Activated B cell treated with CpG ODN at 0.5 μM for 24 hours (primary cell): ENCODE measurements at regions of chr1 and their contacts with region 1.

Region 1: GRCh38 chr1:44631647-44632539 is 42.4 kb downstream of the TMEM53 start:
- DNase-seq: peak; percentile 92
- ATAC-seq: peak; percentile 76
- H3K4me3 Mint-ChIP-seq: peak overlapping the region; percentile 91
- H3K27ac Mint-ChIP-seq: peak overlapping the region; percentile 98
- H3K4me1 Mint-ChIP-seq: peaks cover 38% of the 10 kb centered on the region
- H3K27me3 Mint-ChIP-seq: no peaks in the 10 kb centered on the region
- CTCF ChIP-seq: no peak

Region 2: GRCh38 chr1:44213222-44214112 is 418.4 kb before region 1 on chr1 and contains the start of gene DMAP1:
- CTCF ChIA-PET with region 1: no interaction called
- POLR2A ChIA-PET with region 1: interaction called, 10 read pairs
- intact Hi-C with region 1: no loop called
- DNase-seq: peak; percentile 87
- ATAC-seq: peak; percentile 83
- H3K4me3 Mint-ChIP-seq: peak within 1 kb of the TSS; percentile 95
- H3K27ac Mint-ChIP-seq: peak within 1 kb of the TSS; percentile 91
- H3K4me1 Mint-ChIP-seq: peaks cover 38% of the 10 kb centered on the region
- H3K27me3 Mint-ChIP-seq: no peaks in the 10 kb centered on the region
- CTCF ChIP-seq: no peak
- total RNA-seq, gene DMAP1: 59.6 and 64.7 TPM in 2 replicates

Region 3: GRCh38 chr1:44646261-44647110 is 14.6 kb after region 1 on chr1:
- CTCF ChIA-PET with region 1: no interaction called
- POLR2A ChIA-PET with region 1: interaction called, 23 read pairs
- intact Hi-C with region 1: no loop called
- DNase-seq: no peak
- ATAC-seq: no peak
- H3K4me3 Mint-ChIP-seq: no peak overlapping the region
- H3K27ac Mint-ChIP-seq: no peak overlapping the region
- H3K4me1 Mint-ChIP-seq: no peaks in the 10 kb centered on the region
- H3K27me3 Mint-ChIP-seq: no peaks in the 10 kb centered on the region
- CTCF ChIP-seq: no peak

Region 4: DNA sequence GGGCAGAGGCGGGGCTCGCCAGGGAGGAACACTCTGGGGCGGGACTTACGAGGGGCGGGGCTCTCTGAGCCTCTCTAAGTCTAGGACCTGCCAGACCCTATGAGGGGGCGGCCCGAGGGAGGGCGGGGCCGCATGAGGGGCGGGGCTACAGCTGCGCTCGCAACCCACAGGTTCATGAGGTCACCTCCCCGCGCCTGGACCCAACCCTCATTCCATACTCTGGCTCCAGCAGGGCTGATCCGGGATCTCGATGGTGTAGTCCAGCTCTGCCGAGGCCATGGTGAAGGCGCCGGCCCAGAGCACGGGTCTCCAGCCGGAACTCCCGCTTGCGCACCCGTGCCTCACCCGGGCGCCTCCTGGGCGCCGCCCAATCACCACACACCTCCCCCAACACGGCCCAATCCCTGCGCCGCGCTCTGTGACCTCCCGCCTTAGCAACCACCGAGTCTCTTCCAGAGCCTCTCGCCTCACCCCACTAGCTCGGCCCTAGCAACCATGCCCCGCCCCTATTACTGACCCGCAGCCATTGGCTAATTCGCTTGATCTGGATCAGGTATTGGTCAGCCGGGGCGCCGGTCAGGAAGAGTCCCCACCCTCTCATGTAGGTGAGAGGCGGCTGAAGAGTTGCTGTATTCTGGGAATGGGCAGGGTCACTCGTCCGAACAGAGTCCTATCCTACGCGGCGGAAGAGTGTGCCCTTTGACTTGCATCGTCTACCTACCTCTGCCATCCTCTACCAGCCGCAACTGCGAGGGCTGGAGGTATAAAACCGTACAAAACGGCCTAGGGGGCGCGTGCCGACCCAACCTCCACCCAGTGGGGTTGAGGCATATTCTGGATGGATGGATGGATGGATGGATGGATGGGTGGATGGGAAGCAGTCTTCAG is 42.5 kb after region 1 on chr1 and contains the starts of genes ARMH1 and TMEM53:
- CTCF ChIA-PET with region 1: interaction called, 3 read pairs
- POLR2A ChIA-PET with region 1: interaction called, 58 read pairs
- intact Hi-C with region 1: loop called (anchors 1 kb)
- DNase-seq: peak; percentile 98
- ATAC-seq: peak; percentile 90
- H3K4me3 Mint-ChIP-seq: peak within 1 kb of the TSS; percentile 87
- H3K27ac Mint-ChIP-seq: peak within 1 kb of the TSS; percentile 93
- H3K4me1 Mint-ChIP-seq: peaks cover 32% of the 10 kb centered on the region
- H3K27me3 Mint-ChIP-seq: no peaks in the 10 kb centered on the region
- CTCF ChIP-seq: no peak
- total RNA-seq, gene ARMH1: 18.1 and 19.9 TPM in 2 replicates
- total RNA-seq, gene TMEM53: 4.6 and 4.8 TPM in 2 replicates

Region 5: DNA sequence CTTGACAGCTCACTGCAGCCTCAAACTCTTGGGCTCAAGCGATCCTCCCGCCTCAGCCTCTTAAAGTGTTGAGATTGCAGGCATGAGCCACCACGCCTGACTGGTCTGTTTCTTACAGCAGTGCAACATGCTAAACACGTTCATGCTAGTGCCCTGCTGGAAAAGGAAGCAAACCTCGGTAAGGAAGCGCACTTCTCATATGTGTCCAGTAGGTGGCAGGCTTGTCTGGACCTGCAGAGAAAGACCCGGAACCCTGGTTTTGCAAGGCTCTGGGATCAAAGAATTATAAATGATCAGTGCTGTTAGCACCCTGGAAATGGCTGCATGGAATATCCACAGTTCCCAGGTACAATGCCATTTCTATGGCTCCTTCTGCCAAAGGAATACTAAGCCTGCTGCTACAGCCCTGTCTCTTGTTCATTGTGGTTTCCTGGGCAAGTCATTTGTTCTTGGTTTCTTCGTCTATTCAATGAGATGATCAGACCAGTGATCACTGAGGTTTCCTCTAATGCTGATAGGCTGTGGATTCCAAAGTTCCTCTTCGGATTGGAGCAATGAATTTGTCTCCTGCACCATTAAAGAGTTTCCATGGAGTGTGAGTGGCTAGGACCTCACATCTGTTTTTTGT is 83.2 kb after region 1 on chr1:
- CTCF ChIA-PET with region 1: no interaction called
- POLR2A ChIA-PET with region 1: interaction called, 16 read pairs
- intact Hi-C with region 1: no loop called
- DNase-seq: no peak
- ATAC-seq: peak; percentile 78
- H3K4me3 Mint-ChIP-seq: peak overlapping the region; percentile 58
- H3K27ac Mint-ChIP-seq: peak overlapping the region; percentile 89
- H3K4me1 Mint-ChIP-seq: peaks cover 75% of the 10 kb centered on the region
- H3K27me3 Mint-ChIP-seq: no peaks in the 10 kb centered on the region
- CTCF ChIP-seq: peak; percentile 72

Region 6: DNA sequence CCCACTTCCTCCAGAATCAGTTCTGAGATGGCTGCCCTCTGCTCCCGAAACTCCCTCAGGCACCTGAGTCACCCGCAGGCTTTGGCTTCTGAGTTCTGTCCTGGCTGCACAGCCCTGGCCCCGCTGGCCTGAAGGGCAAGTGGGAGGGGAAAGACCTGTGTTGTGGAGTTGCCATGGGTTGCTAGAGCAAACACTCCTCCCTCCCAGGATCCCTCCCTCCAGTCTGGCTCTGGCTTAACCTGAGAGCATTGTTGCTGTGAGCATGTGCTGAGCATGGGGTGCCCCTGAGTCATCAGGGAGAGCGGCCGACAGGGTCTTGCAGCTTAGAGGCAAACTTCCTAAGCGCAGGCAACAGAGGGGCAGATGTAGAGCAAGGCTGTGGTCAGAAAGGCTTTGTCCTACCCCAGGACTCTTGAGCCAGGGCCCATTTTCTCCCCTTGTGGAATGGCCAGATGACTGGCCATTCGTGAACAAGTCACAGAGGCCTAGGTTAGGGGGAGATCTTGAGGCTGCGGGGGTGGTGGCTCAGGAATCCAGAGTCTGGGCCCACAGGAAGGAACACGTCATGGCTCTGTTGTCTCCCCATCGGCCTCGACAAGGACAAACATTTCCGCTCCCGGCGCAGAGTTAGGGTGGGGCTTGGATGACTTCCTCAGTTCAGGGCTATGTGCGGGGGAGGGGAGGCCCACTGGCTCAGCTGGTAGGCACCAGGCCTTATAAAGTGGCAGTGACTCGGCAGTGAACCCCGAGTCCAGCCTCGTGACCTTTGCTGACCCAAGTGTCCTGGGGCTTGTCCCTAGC is 175.6 kb after region 1 on chr1 and contains the start of gene DYNLT4:
- CTCF ChIA-PET with region 1: no interaction called
- POLR2A ChIA-PET with region 1: no interaction called
- intact Hi-C with region 1: no loop called
- DNase-seq: peak; percentile 67
- ATAC-seq: peak; percentile 32
- H3K4me3 Mint-ChIP-seq: peak within 1 kb of the TSS; percentile 63
- H3K27ac Mint-ChIP-seq: peak within 1 kb of the TSS; percentile 97
- H3K4me1 Mint-ChIP-seq: peaks cover 67% of the 10 kb centered on the region
- H3K27me3 Mint-ChIP-seq: no peaks in the 10 kb centered on the region
- CTCF ChIP-seq: no peak
- total RNA-seq, gene DYNLT4: not detected in 2 replicates

Region 7: DNA sequence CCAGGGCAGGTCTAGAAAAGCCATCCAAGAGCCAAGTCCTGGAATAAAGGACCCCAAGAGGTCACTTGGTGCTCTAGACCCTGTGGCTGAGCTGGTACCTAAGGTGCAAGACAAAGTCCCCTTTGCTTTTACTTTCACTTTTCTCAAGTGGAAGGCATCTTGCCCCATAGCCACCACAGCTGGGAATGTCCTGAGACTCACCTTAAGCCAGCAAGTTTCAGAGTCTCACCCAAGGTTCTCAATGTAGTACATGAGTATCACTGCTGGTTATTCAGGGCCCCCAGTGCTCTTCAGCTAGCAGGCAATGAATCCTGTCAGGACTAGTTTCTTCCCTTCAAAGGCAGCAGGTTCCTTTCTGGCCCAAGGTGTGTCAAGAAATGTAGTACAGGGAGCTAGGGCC is 447.6 kb after region 1 on chr1:
- CTCF ChIA-PET with region 1: no interaction called
- POLR2A ChIA-PET with region 1: no interaction called
- intact Hi-C with region 1: no loop called
- DNase-seq: no peak
- ATAC-seq: no peak
- H3K4me3 Mint-ChIP-seq: no peak overlapping the region
- H3K27ac Mint-ChIP-seq: no peak overlapping the region
- H3K4me1 Mint-ChIP-seq: no peaks in the 10 kb centered on the region
- H3K27me3 Mint-ChIP-seq: peaks cover 23% of the 10 kb centered on the region
- CTCF ChIP-seq: no peak

Region 8: DNA sequence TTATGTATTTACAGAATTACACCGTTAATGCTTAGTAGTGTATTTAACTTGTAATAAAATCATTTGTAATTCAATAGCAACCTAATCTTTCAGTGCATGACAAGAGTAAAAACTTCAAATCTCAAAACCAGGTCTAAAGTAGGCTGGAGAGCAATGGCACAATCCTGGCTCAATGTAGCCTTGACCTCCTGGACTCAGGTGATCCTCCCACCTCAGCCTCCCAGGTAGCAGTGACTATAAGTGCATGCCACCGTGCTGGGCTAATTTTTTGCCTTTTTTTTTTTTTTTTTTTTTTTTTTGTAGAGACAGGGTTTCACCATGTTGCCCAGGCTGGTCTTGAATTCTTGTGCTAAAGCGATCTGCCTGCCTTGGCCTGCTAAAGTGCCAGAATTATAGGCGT is 1107.2 kb after region 1 on chr1:
- CTCF ChIA-PET with region 1: no interaction called
- POLR2A ChIA-PET with region 1: interaction called, 11 read pairs
- intact Hi-C with region 1: no loop called
- DNase-seq: no peak
- ATAC-seq: no peak
- H3K4me3 Mint-ChIP-seq: no peak overlapping the region
- H3K27ac Mint-ChIP-seq: no peak overlapping the region
- H3K4me1 Mint-ChIP-seq: peaks cover 10% of the 10 kb centered on the region
- H3K27me3 Mint-ChIP-seq: no peaks in the 10 kb centered on the region
- CTCF ChIP-seq: no peak

Region 9: GRCh38 chr1:46247436-46248121 is 1615.7 kb after region 1 on chr1 and contains the start of gene RAD54L:
- CTCF ChIA-PET with region 1: no interaction called
- POLR2A ChIA-PET with region 1: interaction called, 3 read pairs
- intact Hi-C with region 1: loop called (anchors 5 kb)
- DNase-seq: peak; percentile 86
- ATAC-seq: peak; percentile 96
- H3K4me3 Mint-ChIP-seq: peak within 1 kb of the TSS; percentile 95
- H3K27ac Mint-ChIP-seq: peak within 1 kb of the TSS; percentile 86
- H3K4me1 Mint-ChIP-seq: peaks cover 19% of the 10 kb centered on the region
- H3K27me3 Mint-ChIP-seq: no peaks in the 10 kb centered on the region
- CTCF ChIP-seq: no peak
- total RNA-seq, gene RAD54L: 2.9 and 3.7 TPM in 2 replicates